Calu3 (cell line): ENCODE measurements at regions of chr17 and their contacts with region 1.

Region 1: GRCh38 chr17:28698253-28698941 is 13.3 kb downstream of the PROCA1 start:
- DNase-seq: peak; percentile 81
- H3K4me3 Mint-ChIP-seq: peak overlapping the region; percentile 26
- H3K27ac Mint-ChIP-seq: peak overlapping the region; percentile 72
- H3K4me1 Mint-ChIP-seq: peaks cover 18% of the 10 kb centered on the region
- H3K27me3 Mint-ChIP-seq: no peaks in the 10 kb centered on the region
- CTCF ChIP-seq: no peak

Region 2: DNA sequence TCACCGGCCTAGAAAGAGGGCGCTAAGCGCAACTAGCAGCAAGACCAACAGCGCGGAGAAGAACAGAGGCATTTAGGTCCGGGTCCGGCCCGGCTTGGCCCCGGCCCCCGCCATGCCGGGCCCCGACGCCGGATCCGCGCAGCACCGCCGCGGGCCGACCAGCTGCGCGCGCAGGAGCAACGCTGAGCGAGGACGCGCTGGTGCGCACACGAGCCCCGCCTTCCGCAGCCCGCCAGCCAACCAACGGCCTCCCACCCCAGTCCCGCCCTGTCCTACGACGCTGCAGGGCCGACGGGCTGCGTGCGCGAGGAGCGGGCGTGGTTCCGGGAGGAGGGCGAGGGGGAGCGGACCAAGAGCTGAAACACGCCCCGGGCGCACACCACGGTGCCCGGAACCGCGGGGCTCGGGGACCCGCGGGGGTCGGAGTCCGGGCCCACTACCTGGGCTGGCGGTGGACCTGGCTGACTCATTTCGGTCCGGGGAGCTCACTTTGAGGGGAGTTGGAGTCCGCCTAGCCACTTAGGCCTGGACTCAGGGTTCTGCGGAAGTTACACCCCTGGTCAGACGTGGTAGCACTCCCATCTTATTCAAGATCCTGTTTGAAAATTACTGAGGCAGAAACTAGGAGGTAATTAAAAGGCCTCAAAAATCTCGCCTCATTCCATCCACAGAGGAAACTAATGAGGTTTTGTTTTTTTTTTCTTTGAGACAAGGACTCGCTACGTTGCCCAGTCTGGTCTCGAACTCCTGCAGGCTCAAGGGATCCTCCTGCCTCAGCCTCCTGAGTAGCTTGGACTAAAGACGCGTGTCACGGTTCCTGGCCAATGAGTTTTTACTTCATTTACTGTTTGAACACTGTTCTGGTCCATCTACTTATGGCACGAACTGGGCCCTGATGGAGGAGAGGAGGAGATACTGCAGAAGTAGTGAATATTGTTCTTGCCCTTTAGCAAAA is 53.1 kb before region 1 on chr17 and contains the start of gene BLTP2:
- CTCF ChIA-PET with region 1: interaction called, 3 read pairs
- intact Hi-C with region 1: loop called (anchors 10 kb)
- DNase-seq: peak; percentile 95
- H3K4me3 Mint-ChIP-seq: peak within 1 kb of the TSS; percentile 97
- H3K27ac Mint-ChIP-seq: peak within 1 kb of the TSS; percentile 93
- H3K4me1 Mint-ChIP-seq: peaks cover 38% of the 10 kb centered on the region
- H3K27me3 Mint-ChIP-seq: no peaks in the 10 kb centered on the region
- CTCF ChIP-seq: no peak
- total RNA-seq, gene BLTP2: 158 and 160 TPM in 2 replicates

Region 3: DNA sequence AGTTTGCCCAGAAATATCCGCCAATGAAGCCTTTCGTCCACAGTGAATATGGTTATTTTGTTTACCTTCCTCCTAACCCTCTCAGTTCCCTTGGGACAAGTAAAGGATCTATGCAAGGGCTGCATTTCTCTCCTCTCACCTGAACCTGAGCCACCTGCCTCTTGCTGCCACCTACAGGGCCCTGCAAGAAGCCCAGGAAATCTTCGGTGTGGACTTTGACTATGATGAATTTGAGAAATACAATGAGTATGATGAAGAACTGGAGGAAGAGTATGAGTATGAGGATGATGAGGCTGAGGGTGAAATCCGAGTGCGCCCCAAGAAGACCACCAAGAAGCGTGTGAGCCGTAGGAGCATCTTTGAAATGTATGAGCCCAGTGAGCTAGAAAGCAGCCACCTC is 22.4 kb before region 1 on chr17:
- CTCF ChIA-PET with region 1: no interaction called
- intact Hi-C with region 1: loop called (anchors 2 kb)
- DNase-seq: peak; percentile 35
- H3K4me3 Mint-ChIP-seq: no peak overlapping the region
- H3K27ac Mint-ChIP-seq: no peak overlapping the region
- H3K4me1 Mint-ChIP-seq: no peaks in the 10 kb centered on the region
- H3K27me3 Mint-ChIP-seq: no peaks in the 10 kb centered on the region
- CTCF ChIP-seq: no peak